Transverse colon (tissue), 4 donors: ENCODE measurements at regions of chr10 and their contacts with region 1.

Region 1: DNA sequence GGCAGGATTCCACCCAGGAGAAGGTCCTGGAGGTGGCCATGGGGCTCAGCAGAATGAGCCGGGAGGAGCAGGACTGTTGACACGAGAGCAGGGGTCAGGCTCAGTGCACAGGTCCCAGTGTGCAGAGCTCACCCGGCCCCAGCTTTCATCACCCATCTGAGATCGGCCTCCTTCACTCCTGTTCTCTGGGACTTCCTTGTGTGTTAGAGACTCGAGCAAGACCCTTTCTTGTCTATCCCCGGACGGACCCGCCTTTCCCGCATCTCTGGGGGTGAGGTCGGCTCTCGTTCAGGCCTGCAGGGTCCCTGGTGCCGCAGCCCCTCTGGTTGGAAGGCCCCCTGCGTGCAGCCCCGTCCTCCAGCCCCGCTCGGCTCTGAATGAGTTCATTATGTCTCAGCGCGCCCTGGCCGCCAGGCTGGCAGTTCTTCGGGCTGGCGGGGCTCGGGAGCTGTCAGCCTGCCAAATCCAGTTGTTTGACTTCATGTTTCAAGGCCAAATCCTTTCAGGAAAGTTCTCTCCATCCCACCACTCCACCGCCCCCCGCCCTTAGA is 127.9 kb downstream of the LHPP start:
- DNase-seq: no peak
- H3K4me3 ChIP-seq: no peak overlapping the region
- H3K27ac ChIP-seq: peak overlapping the region in 2 of 4 donors; percentile 8 to 39
- H3K4me1 ChIP-seq: peaks cover 13 to 21% (median 15%) of the 10 kb centered on the region in 4 donors
- H3K27me3 ChIP-seq: no peaks in the 10 kb centered on the region
- CTCF ChIP-seq: no peak
- EP300 ChIP-seq: no peak
- POLR2A ChIP-seq: no peak

Region 2: GRCh38 chr10:124530215-124530665 is 59.3 kb before region 1 on chr10:
- in situ Hi-C with region 1: no loop called
- intact Hi-C with region 1: no loop called
- DNase-seq: peak; percentile 91
- H3K4me3 ChIP-seq: no peak overlapping the region
- H3K27ac ChIP-seq: no peak overlapping the region
- H3K4me1 ChIP-seq: peaks cover 0 to 17% (median 6%) of the 10 kb centered on the region in 4 donors
- H3K27me3 ChIP-seq: no peaks in the 10 kb centered on the region
- CTCF ChIP-seq: peak; percentile 83 to 93 (median 87)
- EP300 ChIP-seq: no peak
- POLR2A ChIP-seq: no peak

Region 3: GRCh38 chr10:126073606-126074005 is 1484.0 kb after region 1 on chr10:
- in situ Hi-C with region 1: no loop called
- intact Hi-C with region 1: loop called (anchors 10 kb)
- DNase-seq: no peak
- H3K4me3 ChIP-seq: no peak overlapping the region
- H3K27ac ChIP-seq: no peak overlapping the region
- H3K4me1 ChIP-seq: no peaks in the 10 kb centered on the region
- H3K27me3 ChIP-seq: no peaks in the 10 kb centered on the region
- CTCF ChIP-seq: no peak
- EP300 ChIP-seq: no peak
- POLR2A ChIP-seq: no peak